ENCODE measurements at regions of chr21 and their contacts with region 1.

Region 1: DNA sequence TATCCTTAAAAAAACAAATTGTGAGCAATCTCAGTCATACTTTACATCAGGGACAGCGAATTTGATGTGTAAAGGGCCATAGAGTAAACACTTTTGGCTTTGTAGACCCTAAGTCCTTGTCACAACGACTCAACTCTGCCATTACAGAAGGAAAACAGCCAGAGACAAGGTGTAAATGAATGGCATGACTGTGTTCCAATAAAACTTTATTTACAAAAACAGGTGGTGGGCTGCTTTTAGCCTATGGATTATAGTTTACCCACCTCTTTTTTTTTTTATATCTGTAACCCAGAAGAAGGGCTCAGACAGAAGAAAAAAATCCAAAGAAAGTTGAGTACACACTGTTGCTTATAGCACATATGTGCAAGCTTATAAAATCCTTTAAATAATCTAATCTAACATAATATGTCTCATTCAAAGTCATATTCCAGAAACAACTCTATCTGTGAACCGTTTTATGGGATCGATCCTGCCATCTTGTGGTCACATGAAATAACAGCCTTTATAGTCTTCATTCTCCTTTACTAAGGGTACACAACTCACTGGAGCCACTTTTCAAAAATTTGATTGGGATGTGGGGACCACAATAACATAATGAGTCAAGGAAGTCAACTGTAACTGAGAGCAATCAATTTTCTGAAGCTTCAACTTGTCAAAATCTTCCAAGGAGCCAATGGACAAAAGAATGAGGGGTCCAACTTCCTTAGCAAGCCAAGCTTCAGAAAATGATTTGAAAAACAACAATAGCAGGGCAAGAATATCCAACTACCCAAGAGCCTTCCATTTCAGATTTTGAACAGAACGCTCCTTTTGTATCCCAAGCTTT is 142.2 kb upstream of the KRTAP19-8 start:
- DNase-seq: peak; percentile 52
- H3K4me3 Mint-ChIP-seq: peak overlapping the region; percentile 87
- H3K27ac Mint-ChIP-seq: peak overlapping the region; percentile 98
- H3K4me1 Mint-ChIP-seq: peaks cover 75% of the 10 kb centered on the region
- H3K27me3 Mint-ChIP-seq: no peaks in the 10 kb centered on the region

Region 2: DNA sequence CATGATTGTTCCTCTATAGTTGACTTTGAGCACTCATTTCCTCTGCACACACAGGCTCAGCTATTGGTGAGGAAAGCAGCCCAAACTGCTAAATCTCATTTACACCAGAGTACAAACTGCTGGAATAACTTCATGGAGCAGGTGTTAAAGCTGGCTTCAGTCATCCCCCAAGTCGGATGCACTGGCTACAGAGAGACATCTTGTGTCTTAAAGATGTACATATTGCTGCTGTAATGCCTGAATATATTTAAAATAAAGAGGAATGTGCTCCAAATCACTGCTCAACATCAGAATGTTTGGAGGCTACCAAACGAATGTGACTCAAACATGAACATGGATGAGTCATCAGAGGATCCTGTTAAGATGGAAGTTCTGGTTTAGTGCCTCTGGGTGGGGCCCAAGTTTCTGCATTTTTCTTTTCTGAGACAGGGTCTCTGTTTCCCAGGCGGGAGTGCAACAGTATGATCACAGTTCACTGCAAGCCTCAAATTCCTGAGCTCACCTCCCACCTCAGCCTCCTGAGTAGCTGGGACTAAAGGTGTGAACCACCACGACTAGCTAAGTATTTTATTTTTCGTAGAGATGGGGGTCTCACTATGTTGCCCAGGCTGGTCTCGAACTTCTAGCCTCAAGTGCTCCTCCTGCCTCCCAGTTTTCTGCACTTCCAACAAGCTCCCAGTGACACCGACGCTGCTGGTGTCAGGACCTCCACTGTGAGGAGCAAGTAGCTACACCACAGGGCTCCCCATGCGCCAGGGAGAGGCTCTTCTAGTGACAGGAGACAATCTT is 63.1 kb before region 1 on chr21:
- CTCF ChIA-PET with region 1: interaction called, 9 read pairs
- intact Hi-C with region 1: loop called (anchors 1 kb)
- DNase-seq: peak; percentile 42
- H3K4me3 Mint-ChIP-seq: no peak overlapping the region
- H3K27ac Mint-ChIP-seq: peak overlapping the region; percentile 38
- H3K4me1 Mint-ChIP-seq: peaks cover 20% of the 10 kb centered on the region
- H3K27me3 Mint-ChIP-seq: no peaks in the 10 kb centered on the region

Region 3: GRCh38 chr21:31198575-31198974 is 18.1 kb after region 1 on chr21:
- CTCF ChIA-PET with region 1: interaction called, 86 read pairs
- intact Hi-C with region 1: loop called (anchors 1 kb)
- DNase-seq: no peak
- H3K4me3 Mint-ChIP-seq: no peak overlapping the region
- H3K27ac Mint-ChIP-seq: no peak overlapping the region
- H3K4me1 Mint-ChIP-seq: peaks cover 51% of the 10 kb centered on the region
- H3K27me3 Mint-ChIP-seq: no peaks in the 10 kb centered on the region

Region 4: GRCh38 chr21:31343680-31344480 is 163.4 kb after region 1 on chr21 and contains the start of gene TIAM1:
- CTCF ChIA-PET with region 1: no interaction called
- intact Hi-C with region 1: loop called (anchors 1 kb)
- DNase-seq: peak; percentile 58
- H3K4me3 Mint-ChIP-seq: peak within 1 kb of the TSS; percentile 91
- H3K27ac Mint-ChIP-seq: peak within 1 kb of the TSS; percentile 88
- H3K4me1 Mint-ChIP-seq: peaks cover 58% of the 10 kb centered on the region
- H3K27me3 Mint-ChIP-seq: no peaks in the 10 kb centered on the region
- total RNA-seq, gene TIAM1: 50.1 to 51.0 TPM

Region 5: DNA sequence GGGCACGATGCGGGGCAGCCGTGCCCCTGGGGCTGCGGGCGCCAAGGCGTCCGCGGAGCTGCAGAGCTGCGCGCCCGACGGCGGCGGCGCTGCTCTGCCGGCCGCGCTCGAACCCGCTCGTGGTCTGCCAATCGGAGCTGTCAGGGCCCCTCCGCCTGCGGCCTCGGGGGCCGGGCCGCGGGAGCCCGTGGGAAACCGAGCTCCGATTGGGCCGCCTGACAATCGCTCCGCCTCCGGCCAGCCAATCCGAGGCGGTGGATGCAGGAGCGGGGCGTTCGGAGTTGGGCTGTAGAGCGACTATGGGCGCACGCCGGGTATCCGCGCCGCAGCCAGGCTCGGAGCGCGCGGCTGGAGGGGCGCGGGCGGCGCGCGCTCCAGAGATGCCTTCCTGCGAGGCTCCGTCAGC is 378.5 kb after region 1 on chr21:
- CTCF ChIA-PET with region 1: interaction called, 10 read pairs
- intact Hi-C with region 1: loop called (anchors 1 kb)
- DNase-seq: peak; percentile 96
- H3K4me3 Mint-ChIP-seq: peak overlapping the region; percentile 89
- H3K27ac Mint-ChIP-seq: no peak overlapping the region
- H3K4me1 Mint-ChIP-seq: peaks cover 39% of the 10 kb centered on the region
- H3K27me3 Mint-ChIP-seq: peaks cover 23% of the 10 kb centered on the region

Region 6: GRCh38 chr21:31665397-31665796 is 484.9 kb after region 1 on chr21:
- CTCF ChIA-PET with region 1: no interaction called
- intact Hi-C with region 1: loop called (anchors 2 kb)
- DNase-seq: peak; percentile 66
- H3K4me3 Mint-ChIP-seq: peak overlapping the region; percentile 17
- H3K27ac Mint-ChIP-seq: peak overlapping the region; percentile 48
- H3K4me1 Mint-ChIP-seq: peaks cover 93% of the 10 kb centered on the region
- H3K27me3 Mint-ChIP-seq: no peaks in the 10 kb centered on the region